Naive thymus-derived CD4-positive, alpha-beta T cell (primary cell): ENCODE measurements at regions of chr17 and their contacts with region 1.

Region 1: DNA sequence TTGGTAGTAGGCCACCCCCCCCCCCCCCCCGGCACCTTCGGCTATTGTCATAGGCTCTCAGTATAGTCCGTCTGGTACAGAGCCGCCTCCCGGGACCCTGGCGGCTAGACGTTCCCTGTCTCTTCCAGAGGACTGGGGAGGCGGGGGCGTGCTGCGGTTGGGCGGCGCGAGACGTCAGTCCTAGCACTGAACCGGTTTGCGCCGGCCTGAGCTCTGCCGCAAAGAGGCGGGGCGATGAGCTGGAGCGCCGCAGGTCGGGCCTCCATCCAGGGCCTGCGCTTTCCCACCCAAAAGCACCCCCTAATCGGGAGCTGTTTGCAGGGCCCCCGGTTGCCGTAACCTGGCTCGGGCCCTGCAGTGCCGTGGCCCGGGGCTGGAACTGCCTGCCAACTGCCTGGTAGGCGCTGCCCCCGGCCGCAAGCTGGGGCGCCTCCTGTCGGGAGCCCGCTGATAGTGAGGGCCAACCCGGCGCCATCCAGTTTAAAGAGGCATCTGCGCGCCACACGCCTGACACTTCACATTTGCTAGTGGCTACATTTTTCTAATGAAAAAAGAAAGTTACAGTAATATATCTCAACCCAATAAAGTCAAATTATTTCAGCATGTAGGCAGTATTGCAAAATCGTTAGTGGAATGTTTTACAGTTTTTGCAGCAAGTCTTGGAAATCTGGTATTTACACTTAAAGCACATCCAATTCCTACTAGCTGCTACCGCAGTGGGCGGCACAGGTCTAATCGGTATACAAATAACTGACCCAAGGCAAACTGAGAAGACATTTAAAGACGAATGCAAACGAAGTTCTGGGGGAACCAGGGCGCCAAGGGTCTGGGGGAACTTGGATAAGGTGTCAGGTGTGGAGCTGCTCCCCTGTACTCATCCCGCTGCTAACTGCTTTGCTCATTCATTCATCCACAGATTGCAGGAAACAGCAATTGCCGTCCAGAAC is 748 bp upstream of the USP22 start:
- DNase-seq: peak; percentile 87 to 99 (median 96)
- ATAC-seq: peak; percentile 88
- H3K4me3 ChIP-seq: peak overlapping the region; percentile 73
- H3K4me3 Mint-ChIP-seq: peak overlapping the region; percentile 75 to 96 (median 86)
- H3K27ac ChIP-seq: peak overlapping the region; percentile 91
- H3K27ac Mint-ChIP-seq: peak overlapping the region; percentile 90 to 97 (median 93)
- H3K4me1 ChIP-seq: peaks cover 12 to 22% of the 10 kb centered on the region in 2 donors
- H3K4me1 Mint-ChIP-seq: peaks cover 15 to 40% (median 31%) of the 10 kb centered on the region in 7 donors
- H3K27me3 ChIP-seq: no peaks in the 10 kb centered on the region
- H3K27me3 Mint-ChIP-seq: peaks cover 0 to 4% (median 0%) of the 10 kb centered on the region in 5 donors

Region 2: DNA sequence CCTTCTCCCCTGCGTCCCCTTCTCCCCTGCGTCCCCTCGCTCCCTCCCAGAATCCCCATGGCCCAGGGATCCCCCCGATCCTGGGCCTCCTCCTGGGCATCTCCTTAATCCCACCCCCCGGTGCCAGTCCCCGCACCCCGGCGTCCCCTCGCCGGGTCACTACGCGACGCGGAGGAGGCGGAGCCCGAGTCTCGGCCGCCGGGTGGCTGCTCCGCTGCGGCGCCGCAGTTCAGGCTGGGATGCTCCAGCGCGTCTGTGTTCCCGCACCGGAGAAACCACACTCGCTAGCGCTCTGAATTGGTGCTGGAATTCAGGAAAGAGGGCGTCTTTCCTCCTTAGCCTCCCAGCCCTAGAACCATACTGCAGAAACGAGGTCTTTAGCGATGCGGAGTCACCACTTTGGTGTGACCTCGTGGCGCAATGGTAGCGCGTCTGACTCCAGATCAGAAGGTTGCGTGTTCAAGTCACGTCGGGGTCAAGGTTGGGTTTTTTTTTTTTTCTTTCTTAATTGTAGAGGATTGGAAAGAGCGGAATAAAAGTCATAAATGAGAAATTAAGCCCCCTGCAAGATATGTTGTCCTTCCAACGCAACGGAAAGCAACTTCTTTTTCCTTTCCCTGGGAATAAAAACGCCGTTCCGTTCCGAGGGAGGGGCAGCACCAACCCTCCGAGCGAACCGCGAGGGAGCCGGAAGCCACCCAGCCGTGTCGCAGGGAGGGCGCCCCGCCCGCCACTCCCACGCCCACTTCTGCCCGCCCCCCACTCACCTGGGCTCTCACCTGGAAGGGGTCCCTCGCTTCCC is 1535.6 kb before region 1 on chr17:
- CTCF ChIA-PET with region 1: no interaction called
- POLR2A ChIA-PET with region 1: no interaction called
- intact Hi-C with region 1: loop called in 1 of 2 experiments (anchors 5 kb)
- DNase-seq: peak; percentile 82 to 96 (median 90)
- ATAC-seq: peak; percentile 85
- H3K4me3 ChIP-seq: peak overlapping the region; percentile 99
- H3K4me3 Mint-ChIP-seq: peak overlapping the region; percentile 87 to 99 (median 91)
- H3K27ac ChIP-seq: peak overlapping the region; percentile 67
- H3K27ac Mint-ChIP-seq: peak overlapping the region; percentile 95 to 99 (median 96)
- H3K4me1 ChIP-seq: peaks cover 0 to 6% of the 10 kb centered on the region in 2 donors
- H3K4me1 Mint-ChIP-seq: peaks cover 8 to 13% (median 11%) of the 10 kb centered on the region in 7 donors
- H3K27me3 ChIP-seq: no peaks in the 10 kb centered on the region
- H3K27me3 Mint-ChIP-seq: peaks cover 0 to 24% (median 0%) of the 10 kb centered on the region in 5 donors

Region 3: GRCh38 chr17:20992987-20993862 is 50.3 kb before region 1 on chr17:
- CTCF ChIA-PET with region 1: no interaction called
- POLR2A ChIA-PET with region 1: interaction called, 4 read pairs
- intact Hi-C with region 1: loop called in 1 of 2 experiments (anchors 2 kb)
- DNase-seq: peak; percentile 51 to 75 (median 65)
- ATAC-seq: peak; percentile 88
- H3K4me3 ChIP-seq: no peak overlapping the region
- H3K4me3 Mint-ChIP-seq: peak overlapping the region in 2 of 10 donors; percentile 21 to 25
- H3K27ac ChIP-seq: no peak overlapping the region
- H3K27ac Mint-ChIP-seq: peak overlapping the region in 3 of 9 donors; percentile 24 to 70 (median 38)
- H3K4me1 ChIP-seq: peaks cover 0 to under 1% of the 10 kb centered on the region in 2 donors
- H3K4me1 Mint-ChIP-seq: peaks cover 6 to 14% (median 7%) of the 10 kb centered on the region in 7 donors
- H3K27me3 ChIP-seq: no peaks in the 10 kb centered on the region
- H3K27me3 Mint-ChIP-seq: no peaks in the 10 kb centered on the region

Region 4: DNA sequence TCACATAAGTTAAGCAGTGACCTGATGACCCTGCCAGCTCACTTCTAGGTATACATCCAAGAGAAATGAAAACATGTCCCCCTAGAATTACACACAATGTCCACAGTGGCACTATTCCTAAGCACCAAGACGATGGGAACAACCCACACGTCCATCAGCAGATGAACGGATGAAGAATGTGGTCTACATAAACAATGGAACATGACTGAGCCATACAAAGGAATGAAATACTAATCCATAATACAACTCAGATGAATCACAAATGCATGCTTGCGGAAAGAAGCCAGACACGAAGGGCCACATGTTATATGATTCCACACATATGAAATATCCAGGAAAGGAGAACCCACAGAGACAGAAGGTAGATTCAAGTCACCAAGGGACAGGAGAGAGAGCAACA is 18.1 kb before region 1 on chr17:
- CTCF ChIA-PET with region 1: interaction called, 10 read pairs
- POLR2A ChIA-PET with region 1: interaction called, 20 read pairs
- intact Hi-C with region 1: loop called in 1 of 2 experiments (anchors 1 kb)
- DNase-seq: no peak
- ATAC-seq: no peak
- H3K4me3 ChIP-seq: no peak overlapping the region
- H3K4me3 Mint-ChIP-seq: peak overlapping the region in 3 of 10 donors; percentile 1 to 64 (median 36)
- H3K27ac ChIP-seq: no peak overlapping the region
- H3K27ac Mint-ChIP-seq: peak overlapping the region in 6 of 9 donors; percentile 15 to 82 (median 50)
- H3K4me1 ChIP-seq: peaks cover 9 to 28% of the 10 kb centered on the region in 2 donors
- H3K4me1 Mint-ChIP-seq: peaks cover 37 to 77% (median 71%) of the 10 kb centered on the region in 7 donors
- H3K27me3 ChIP-seq: no peaks in the 10 kb centered on the region
- H3K27me3 Mint-ChIP-seq: no peaks in the 10 kb centered on the region

Region 5: DNA sequence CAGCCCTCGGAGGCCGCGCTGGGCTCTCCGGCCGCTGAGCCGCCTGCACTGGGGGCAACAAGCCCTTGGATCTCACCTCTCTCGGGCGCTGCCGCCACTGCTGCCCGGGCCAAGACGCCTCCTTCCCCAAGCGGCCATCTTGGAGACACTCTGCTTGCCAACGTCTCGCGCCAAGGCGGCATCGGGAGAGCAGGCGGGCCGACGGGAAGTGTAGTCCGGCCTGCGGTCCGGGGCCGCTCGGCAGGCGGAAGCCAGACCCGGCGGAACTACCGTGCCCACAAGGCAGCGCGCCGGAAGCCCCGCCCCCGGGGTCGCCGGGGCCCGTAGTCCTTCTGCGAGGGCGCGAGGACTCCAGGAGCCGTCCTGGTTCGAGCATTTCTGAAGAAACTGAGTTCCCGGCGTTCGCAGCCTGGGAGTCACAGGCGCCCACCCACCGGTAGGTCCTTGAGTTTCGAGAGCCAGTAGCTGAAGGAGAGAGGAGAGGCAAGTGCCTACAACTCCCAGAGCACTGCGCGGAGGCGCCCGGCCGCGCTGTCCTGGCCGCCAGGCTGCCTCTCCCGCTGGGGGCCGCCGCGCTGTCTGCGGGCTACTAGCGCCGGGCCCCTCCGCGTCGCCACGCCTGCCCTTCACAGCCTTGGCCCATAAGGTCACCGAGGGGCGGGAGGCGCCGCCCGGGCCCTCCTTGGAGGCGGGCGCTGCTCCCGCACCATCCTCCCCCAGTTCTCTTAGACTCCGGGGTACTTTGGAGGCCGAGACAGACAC is 170.6 kb after region 1 on chr17 and contains the start of gene TMEM11:
- CTCF ChIA-PET with region 1: interaction called, 3 read pairs
- POLR2A ChIA-PET with region 1: interaction called, 9 read pairs
- intact Hi-C with region 1: loop called (anchors 1 kb)
- DNase-seq: peak; percentile 91 to 97 (median 95)
- ATAC-seq: peak; percentile 96
- H3K4me3 ChIP-seq: peak within 1 kb of the TSS; percentile 93
- H3K4me3 Mint-ChIP-seq: peak within 1 kb of the TSS; percentile 90 to 97 (median 92)
- H3K27ac ChIP-seq: peak within 1 kb of the TSS; percentile 97
- H3K27ac Mint-ChIP-seq: peak within 1 kb of the TSS; percentile 84 to 96 (median 92)
- H3K4me1 ChIP-seq: peaks cover 25 to 32% of the 10 kb centered on the region in 2 donors
- H3K4me1 Mint-ChIP-seq: peaks cover 43 to 74% (median 53%) of the 10 kb centered on the region in 7 donors
- H3K27me3 ChIP-seq: no peaks in the 10 kb centered on the region
- H3K27me3 Mint-ChIP-seq: no peaks in the 10 kb centered on the region
- total RNA-seq, gene TMEM11: 11.7 to 22.9 (median 19.3) TPM

Region 6: DNA sequence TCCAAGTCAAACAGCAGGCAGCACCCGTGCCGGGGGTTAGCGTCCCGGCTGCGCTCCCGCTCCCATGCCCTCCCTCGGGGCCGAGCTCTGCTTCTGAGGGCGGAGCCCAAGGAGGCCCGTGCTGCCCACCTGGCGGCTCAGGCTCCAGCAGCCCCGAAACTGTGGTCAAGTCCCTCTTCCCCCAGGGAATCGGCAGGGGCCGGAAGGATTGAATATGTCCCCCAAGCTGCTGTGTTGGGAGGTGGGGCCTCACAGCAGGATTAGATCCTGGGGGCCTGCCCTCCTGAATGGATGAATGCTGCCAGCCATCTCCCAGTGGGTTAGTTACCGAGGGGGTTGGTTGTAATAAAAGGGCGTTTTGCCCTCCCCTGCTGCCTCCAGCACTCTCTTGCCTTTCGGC is 274.9 kb after region 1 on chr17:
- CTCF ChIA-PET with region 1: no interaction called
- POLR2A ChIA-PET with region 1: no interaction called
- intact Hi-C with region 1: loop called in 1 of 2 experiments (anchors 5 kb)
- DNase-seq: no peak
- ATAC-seq: no peak
- H3K4me3 ChIP-seq: no peak overlapping the region
- H3K4me3 Mint-ChIP-seq: no peak overlapping the region
- H3K27ac ChIP-seq: no peak overlapping the region
- H3K27ac Mint-ChIP-seq: no peak overlapping the region
- H3K4me1 ChIP-seq: no peaks in the 10 kb centered on the region
- H3K4me1 Mint-ChIP-seq: peaks cover 0 to 7% (median 6%) of the 10 kb centered on the region in 7 donors
- H3K27me3 ChIP-seq: no peaks in the 10 kb centered on the region
- H3K27me3 Mint-ChIP-seq: peaks cover 0 to 5% (median 5%) of the 10 kb centered on the region in 5 donors

Region 7: GRCh38 chr17:21551081-21551881 is 507.7 kb after region 1 on chr17:
- CTCF ChIA-PET with region 1: no interaction called
- POLR2A ChIA-PET with region 1: no interaction called
- intact Hi-C with region 1: loop called in 1 of 2 experiments (anchors 1 kb)
- DNase-seq: peak; percentile 68 to 89 (median 80)
- ATAC-seq: peak; percentile 96
- H3K4me3 ChIP-seq: peak overlapping the region; percentile 69
- H3K4me3 Mint-ChIP-seq: peak overlapping the region; percentile 78 to 91 (median 88)
- H3K27ac ChIP-seq: peak overlapping the region; percentile 69
- H3K27ac Mint-ChIP-seq: peak overlapping the region in 6 of 9 donors; percentile 16 to 66 (median 46)
- H3K4me1 ChIP-seq: peaks cover 0 to 10% of the 10 kb centered on the region in 2 donors
- H3K4me1 Mint-ChIP-seq: peaks cover 24 to 53% (median 41%) of the 10 kb centered on the region in 7 donors
- H3K27me3 ChIP-seq: no peaks in the 10 kb centered on the region
- H3K27me3 Mint-ChIP-seq: peaks cover 17 to 31% (median 27%) of the 10 kb centered on the region in 5 donors